Aorta (tissue), 5 donors: ENCODE measurements at regions of chr4 and their contacts with region 1.

Region 1: GRCh38 chr4:108570993-108571569 is 49.3 kb upstream of the RPL34 start:
- DNase-seq: no peak
- ATAC-seq: no peak
- H3K4me3 ChIP-seq: no peak overlapping the region
- H3K27ac ChIP-seq: no peak overlapping the region
- H3K4me1 ChIP-seq: no peaks in the 10 kb centered on the region
- H3K27me3 ChIP-seq: no peaks in the 10 kb centered on the region

Region 2: DNA sequence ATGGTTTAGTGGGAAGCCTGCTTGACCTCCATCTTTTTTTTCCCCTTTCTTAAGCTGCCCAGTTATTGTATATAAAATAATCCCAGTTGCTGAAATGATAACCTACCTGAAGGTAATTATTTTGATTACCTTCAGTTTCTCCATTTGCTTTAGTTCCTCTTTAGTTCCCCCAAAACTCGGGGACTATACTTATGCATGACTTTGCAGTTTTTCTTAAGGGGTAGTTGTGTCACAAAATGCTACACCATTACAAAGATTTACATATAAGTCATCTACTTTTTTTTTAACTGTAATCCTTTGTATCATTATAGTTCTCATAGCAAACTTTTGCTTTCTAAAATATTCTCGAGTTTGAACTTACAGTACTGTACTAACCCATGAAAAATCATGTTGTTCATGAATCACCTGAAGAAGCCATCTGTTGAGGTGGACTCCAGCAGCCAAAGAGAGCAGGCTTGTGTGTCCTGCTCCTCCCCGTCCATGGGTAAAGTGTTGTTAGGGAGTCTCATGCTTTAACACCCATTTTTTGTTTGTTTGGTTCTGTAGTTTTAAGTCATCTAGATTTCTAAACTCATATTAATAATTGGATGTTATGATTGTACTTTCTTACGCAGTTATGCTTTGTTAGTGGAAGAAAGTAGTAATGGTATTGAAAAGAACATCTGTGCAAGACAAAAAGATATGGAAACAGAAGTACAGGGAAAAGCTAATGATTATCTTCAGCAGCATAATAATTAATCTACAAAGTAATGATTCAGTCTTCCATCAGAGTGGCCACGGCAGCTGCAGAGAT is 546.8 kb before region 1 on chr4:
- intact Hi-C with region 1: loop called in 1 of 2 experiments (anchors 5 kb)
- DNase-seq: no peak
- ATAC-seq: no peak
- H3K4me3 ChIP-seq: no peak overlapping the region
- H3K27ac ChIP-seq: no peak overlapping the region
- H3K4me1 ChIP-seq: no peaks in the 10 kb centered on the region
- H3K27me3 ChIP-seq: no peaks in the 10 kb centered on the region

Region 3: DNA sequence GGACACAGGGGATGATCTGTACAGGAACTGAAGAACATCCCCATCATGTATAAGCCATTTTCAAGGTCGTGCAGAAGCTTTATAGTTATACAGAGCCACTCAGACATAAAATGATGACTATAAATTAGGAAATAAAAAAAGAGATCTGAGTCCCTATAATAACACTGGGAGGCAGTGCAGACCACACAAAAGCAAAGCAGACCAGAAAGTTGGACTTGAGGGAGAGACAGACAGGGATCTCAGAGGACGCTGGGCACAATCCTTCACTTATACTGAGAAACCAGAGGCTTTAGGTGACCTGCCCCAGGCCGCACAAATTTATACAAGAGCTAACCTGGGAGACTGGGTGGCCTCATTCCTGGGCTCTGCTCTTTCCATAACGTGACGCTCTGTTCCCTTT is 510.9 kb before region 1 on chr4:
- intact Hi-C with region 1: loop called in 1 of 2 experiments (anchors 10 kb)
- DNase-seq: no peak
- ATAC-seq: no peak
- H3K4me3 ChIP-seq: no peak overlapping the region
- H3K27ac ChIP-seq: no peak overlapping the region
- H3K4me1 ChIP-seq: no peaks in the 10 kb centered on the region
- H3K27me3 ChIP-seq: no peaks in the 10 kb centered on the region